ENCODE measurements at regions of chr17 and their contacts with region 1.

Region 1: DNA sequence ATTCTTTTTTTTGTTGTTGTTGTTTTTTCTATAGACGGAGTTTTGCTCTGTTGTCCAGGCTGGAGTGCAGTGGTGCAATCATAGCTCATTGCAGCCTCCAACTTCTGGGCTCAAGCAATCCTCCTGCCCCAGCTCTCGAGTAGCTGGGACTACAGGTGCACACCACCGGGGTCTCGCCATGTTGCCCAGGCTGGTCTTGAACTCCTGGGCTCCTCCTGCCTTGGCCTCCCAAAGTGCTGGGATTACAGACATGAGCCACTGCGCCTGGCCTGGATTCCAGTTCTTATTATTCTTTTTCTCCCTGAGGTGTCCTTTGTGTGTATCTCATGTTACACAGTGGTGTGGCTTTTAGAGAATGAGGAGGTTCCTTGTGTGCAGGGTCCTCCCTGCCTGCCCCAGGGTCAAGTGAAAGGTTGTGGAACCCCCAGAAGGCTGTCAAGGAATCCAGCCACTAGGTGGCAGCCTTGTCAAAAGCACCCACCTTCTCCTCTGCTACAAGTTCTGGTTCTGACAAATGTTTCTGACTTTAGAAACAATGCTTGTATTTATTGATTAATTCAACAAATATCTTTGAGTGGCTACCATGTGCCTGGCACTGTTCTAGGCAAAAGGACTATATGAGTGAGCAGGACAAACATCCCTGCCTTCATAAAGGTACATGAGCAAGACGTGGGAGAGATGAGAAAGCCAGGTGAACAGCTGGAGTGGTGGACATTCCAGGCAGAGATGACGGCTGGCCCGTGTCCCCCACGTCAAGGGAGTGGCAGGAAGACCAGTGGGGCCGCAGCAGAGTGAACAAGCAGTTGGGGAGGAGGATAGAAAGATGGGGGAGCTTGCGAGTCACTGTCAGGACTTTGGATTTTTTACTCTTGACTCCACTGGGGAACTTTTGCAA is 112.4 kb downstream of the SPECC1 start:
- DNase-seq: no peak
- H3K4me3 ChIP-seq: no peak overlapping the region
- H3K27ac ChIP-seq: no peak overlapping the region
- H3K4me1 ChIP-seq: peaks cover 0 to 14% (median 0%) of the 10 kb centered on the region in 3 donors
- H3K27me3 ChIP-seq: no peaks in the 10 kb centered on the region
- CTCF ChIP-seq: peak; percentile 77 to 92 (median 82)
- POLR2A ChIP-seq: no peak

Region 2: GRCh38 chr17:19996502-19996901 is 125.1 kb before region 1 on chr17:
- intact Hi-C with region 1: loop called (anchors 5 kb)
- DNase-seq: no peak
- H3K4me3 ChIP-seq: no peak overlapping the region
- H3K27ac ChIP-seq: no peak overlapping the region
- H3K4me1 ChIP-seq: peaks cover 0 to 21% (median 8%) of the 10 kb centered on the region in 3 donors
- H3K27me3 ChIP-seq: no peaks in the 10 kb centered on the region
- CTCF ChIP-seq: no peak
- POLR2A ChIP-seq: no peak

Region 3: GRCh38 chr17:20315821-20316220 is 194.2 kb after region 1 on chr17:
- intact Hi-C with region 1: loop called (anchors 5 kb)
- DNase-seq: no peak
- H3K4me3 ChIP-seq: no peak overlapping the region
- H3K27ac ChIP-seq: no peak overlapping the region
- H3K4me1 ChIP-seq: peaks cover 0 to 7% (median 3%) of the 10 kb centered on the region in 3 donors
- H3K27me3 ChIP-seq: no peaks in the 10 kb centered on the region
- CTCF ChIP-seq: no peak
- POLR2A ChIP-seq: no peak